IMR-90 (cell line): ENCODE measurements at regions of chr13 and their contacts with region 1.

Region 1: DNA sequence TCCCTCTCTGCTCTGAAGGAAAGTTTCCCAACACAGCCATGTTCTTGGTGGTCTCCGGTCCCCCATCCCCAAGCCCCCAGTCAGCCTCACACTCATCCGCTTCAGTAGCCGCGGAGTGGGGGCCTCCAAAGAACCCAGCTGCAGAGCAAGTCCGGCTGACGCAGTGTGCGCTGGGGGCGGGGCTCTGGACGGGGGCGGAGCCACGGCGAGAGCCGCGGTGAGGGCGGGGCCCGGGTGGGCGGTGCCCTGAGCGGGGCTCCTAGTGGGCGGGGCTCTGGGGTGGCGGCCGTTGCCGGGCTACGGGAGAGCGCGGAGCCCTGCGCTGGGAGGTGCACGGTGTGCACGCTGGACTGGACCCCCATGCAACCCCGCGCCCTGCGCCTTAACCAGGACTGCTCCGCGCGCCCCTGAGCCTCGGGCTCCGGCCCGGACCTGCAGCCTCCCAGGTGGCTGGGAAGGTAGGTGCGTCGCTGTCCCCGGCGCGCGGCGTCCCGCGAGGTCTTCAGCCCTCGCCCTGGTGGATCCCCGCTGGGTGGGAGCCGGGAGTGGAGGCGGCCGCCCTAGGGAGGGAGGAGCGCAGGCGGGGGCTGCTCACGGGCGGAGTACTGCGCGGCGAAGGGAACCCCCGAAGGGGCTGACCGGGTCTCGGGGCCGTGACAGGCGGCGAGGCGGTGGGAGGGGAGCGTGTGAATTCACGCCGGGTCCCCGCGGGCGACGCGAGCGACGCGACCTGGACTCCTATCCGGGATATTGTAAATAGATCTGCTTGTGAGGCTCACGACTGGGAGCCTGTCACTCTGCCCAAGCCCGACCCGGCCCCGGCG is 9.1 kb downstream of the TNFRSF19 start:
- DNase-seq: peak; percentile 87
- ATAC-seq: peak; percentile 98
- H3K4me3 ChIP-seq: peak overlapping the region; percentile 91
- H3K27ac ChIP-seq: peak overlapping the region; percentile 79
- H3K4me1 ChIP-seq: peaks cover 4% of the 10 kb centered on the region
- H3K27me3 ChIP-seq: no peaks in the 10 kb centered on the region
- CTCF ChIP-seq: no peak
- POLR2A ChIP-seq: peak; percentile 26
- RAD21 ChIP-seq: no peak

Region 2: GRCh38 chr13:23690668-23691067 is 111.4 kb after region 1 on chr13:
- CTCF ChIA-PET with region 1: no interaction called
- POLR2A ChIA-PET with region 1: no interaction called
- dilution Hi-C with region 1: no loop called
- in situ Hi-C with region 1: no loop called
- intact Hi-C with region 1: no loop called
- DNase-seq: no peak
- ATAC-seq: peak; percentile 27; the same call in 1 of the 2 replicates
- H3K4me3 ChIP-seq: no peak overlapping the region
- H3K27ac ChIP-seq: no peak overlapping the region
- H3K4me1 ChIP-seq: peaks cover 14% of the 10 kb centered on the region
- H3K27me3 ChIP-seq: no peaks in the 10 kb centered on the region
- CTCF ChIP-seq: no peak
- POLR2A ChIP-seq: no peak
- RAD21 ChIP-seq: no peak

Region 3: GRCh38 chr13:23707674-23708073 is 128.4 kb after region 1 on chr13:
- CTCF ChIA-PET with region 1: no interaction called
- POLR2A ChIA-PET with region 1: no interaction called
- dilution Hi-C with region 1: no loop called
- in situ Hi-C with region 1: no loop called
- intact Hi-C with region 1: loop called (anchors 5 kb)
- DNase-seq: peak; percentile 49
- ATAC-seq: no peak
- H3K4me3 ChIP-seq: no peak overlapping the region
- H3K27ac ChIP-seq: peak overlapping the region; percentile 5; the same call in 1 of the 2 replicates
- H3K4me1 ChIP-seq: peaks cover 21% of the 10 kb centered on the region
- H3K27me3 ChIP-seq: no peaks in the 10 kb centered on the region
- CTCF ChIP-seq: peak; percentile 52
- POLR2A ChIP-seq: no peak
- RAD21 ChIP-seq: peak; percentile 59

Region 4: DNA sequence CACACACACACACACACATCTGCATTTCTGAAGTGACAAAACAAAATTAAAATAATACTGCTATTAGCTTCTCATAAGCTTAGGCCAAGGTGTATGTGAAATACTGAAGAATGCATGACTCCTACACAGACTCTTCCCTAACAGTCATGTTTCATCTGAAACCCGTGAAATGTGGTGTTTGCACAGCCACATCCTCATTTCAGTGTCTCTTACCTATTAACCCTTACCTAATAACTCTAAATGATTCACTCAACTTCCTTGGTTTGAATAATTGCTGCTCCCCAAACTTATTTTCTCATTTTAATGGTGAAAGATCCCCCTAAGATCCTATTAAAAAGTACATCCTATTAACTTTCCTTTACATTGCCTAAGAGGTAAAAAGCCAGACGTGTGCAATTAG is 192.3 kb after region 1 on chr13:
- CTCF ChIA-PET with region 1: no interaction called
- POLR2A ChIA-PET with region 1: no interaction called
- dilution Hi-C with region 1: no loop called
- in situ Hi-C with region 1: no loop called
- intact Hi-C with region 1: loop called (anchors 10 kb)
- DNase-seq: no peak
- ATAC-seq: no peak
- H3K4me3 ChIP-seq: no peak overlapping the region
- H3K27ac ChIP-seq: no peak overlapping the region
- H3K4me1 ChIP-seq: peaks cover 13% of the 10 kb centered on the region
- H3K27me3 ChIP-seq: no peaks in the 10 kb centered on the region
- CTCF ChIP-seq: no peak
- POLR2A ChIP-seq: no peak
- RAD21 ChIP-seq: no peak